GM12878 (cell line): ENCODE measurements at regions of chr16 and their contacts with region 1.

Region 1: DNA sequence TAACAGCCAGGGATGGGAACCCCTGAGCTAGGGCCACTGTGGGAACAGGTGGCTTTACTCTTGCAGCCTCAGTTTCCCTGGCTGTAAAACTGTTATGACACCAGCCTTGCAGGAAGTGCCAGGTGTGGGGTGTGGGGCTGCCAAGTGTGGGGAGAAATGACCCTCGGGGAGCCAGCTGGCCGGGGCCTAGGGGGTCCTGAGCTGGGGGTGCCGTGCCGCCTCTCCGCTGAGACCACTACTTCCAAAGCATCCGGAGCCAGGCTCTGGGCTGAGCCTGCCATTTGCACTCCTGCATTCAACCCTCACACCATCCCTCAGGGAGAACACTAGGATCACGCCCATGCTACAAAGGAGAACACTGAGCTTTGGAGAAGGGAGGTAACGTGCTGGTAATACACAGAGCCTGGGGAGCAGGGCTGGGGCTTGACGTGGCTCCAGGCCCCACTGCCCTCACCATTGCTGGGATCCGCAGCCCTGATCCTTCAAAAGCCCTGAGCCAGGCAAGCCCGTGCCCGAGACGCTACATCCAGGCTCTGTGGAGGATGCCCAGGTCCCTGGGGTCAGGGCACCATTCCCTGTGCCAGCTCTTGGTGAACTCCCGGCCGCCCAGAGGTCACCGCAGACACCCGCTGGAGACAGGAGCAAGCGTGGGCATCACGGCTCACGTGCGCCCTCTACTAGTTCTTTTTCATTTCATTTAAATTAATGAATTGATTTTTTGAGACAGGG is 28.8 kb upstream of the GINS2 start:
- DNase-seq: no peak
- ATAC-seq: peak; percentile 78
- H3K4me3 ChIP-seq: no peak overlapping the region
- H3K27ac ChIP-seq: no peak overlapping the region
- H3K4me1 ChIP-seq: no peaks in the 10 kb centered on the region
- H3K27me3 ChIP-seq: no peaks in the 10 kb centered on the region
- CTCF ChIP-seq: peak; percentile 57 to 65 (median 64)
- EP300 ChIP-seq: no peak
- POLR2A ChIP-seq: no peak
- RAD21 ChIP-seq: peak; percentile 77

Region 2: DNA sequence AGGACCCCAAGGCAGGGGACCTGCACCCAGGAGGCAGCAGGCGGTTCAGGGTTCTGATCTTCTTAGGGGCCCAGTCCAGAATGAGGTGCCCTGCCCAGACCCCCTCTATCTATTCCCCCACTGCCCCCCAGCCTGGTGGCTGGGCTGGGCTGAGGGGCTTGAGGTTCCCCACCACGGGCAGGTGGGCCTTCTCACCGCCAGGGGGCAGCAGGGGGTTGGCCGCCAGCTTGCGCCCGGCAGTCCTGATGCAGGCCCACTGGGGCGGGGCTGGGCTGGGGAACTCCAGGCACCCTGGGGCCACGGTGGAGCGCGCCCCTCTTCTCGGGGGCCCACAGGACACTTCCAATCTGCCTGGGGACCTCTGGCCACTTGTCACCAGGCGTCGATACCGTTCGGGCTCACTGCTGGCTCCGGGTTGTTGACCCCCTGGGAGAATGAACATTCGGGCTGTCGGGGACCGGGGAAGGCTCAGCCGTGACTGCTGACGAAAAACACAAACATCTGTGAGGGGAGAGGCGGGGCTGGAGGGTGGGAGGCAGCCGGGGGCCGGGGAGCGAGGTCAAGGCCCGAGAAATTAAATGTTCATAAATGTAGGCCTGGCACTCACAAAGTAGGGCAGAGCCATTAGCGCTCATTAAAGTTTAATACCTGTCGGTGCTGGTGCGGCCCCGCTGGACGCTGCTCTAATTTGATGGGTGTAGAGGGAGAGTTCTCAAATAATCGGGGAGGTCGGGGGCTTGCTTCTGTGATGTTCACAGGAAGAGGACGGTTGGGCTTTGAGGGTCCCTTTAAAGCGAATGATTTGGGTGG is 323.7 kb before region 1 on chr16:
- CTCF ChIA-PET with region 1: interaction called, 4 read pairs
- POLR2A ChIA-PET with region 1: no interaction called
- RAD21 ChIA-PET with region 1: interaction called, 3 read pairs
- SMC1A ChIA-PET with region 1: no interaction called
- in situ Hi-C with region 1: no loop called
- intact Hi-C with region 1: loop called (anchors 10 kb)
- DNase-seq: no peak
- ATAC-seq: peak; percentile 86
- H3K4me3 ChIP-seq: no peak overlapping the region
- H3K27ac ChIP-seq: no peak overlapping the region
- H3K4me1 ChIP-seq: peaks cover 5% of the 10 kb centered on the region
- H3K27me3 ChIP-seq: peaks cover 0 to 6% of the 10 kb centered on the region in 2 experiments; a peak in 2 of 4 replicates
- CTCF ChIP-seq: peak; percentile 71 to 93 (median 84)
- EP300 ChIP-seq: no peak
- POLR2A ChIP-seq: no peak
- RAD21 ChIP-seq: peak; percentile 57

Region 3: DNA sequence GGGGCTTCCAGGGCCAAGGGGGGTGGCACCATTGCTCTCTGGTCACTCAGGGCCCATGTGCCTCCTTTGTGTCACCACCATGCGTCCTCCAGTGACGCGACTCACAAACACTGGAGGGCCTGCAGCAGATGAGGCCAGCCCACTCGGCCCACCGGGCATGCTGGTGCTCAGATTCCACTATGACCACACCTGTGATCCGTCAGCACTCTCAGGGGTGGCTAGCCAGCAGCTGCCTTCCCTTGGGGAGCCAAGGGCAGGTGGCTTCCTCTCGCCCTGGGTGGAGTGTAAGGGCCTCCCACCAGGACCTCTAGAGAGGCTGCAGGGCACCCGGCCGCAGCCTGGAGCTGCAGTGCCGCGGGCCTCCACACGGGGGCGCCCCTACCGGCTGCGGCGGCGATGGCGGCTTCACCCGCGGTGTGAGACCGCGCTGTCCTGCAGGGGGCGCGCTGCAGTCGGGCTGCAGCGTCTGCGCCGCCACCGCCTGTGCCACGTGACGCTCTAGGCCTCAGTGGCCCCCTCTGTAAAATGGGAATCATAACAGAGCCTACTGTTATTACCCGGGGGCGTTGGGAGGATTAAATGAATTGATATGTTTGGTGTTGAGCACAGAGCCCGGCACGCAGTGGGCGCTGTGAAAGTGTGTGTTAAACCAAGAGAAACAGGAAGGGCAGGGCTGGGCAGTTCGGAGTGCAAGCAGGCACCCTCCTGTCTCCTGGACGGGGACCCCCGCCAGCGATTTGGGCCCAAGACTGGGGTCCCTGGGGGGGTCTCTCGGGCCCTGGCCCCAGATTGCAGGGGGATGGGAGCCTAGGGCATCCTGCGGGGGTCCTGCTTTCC is 296.8 kb before region 1 on chr16:
- CTCF ChIA-PET with region 1: interaction called, 4 read pairs
- POLR2A ChIA-PET with region 1: no interaction called
- RAD21 ChIA-PET with region 1: no interaction called
- SMC1A ChIA-PET with region 1: interaction called, 4 read pairs
- in situ Hi-C with region 1: no loop called
- intact Hi-C with region 1: loop called (anchors 5 kb)
- DNase-seq: no peak
- ATAC-seq: peak; percentile 89
- H3K4me3 ChIP-seq: no peak overlapping the region
- H3K27ac ChIP-seq: no peak overlapping the region
- H3K4me1 ChIP-seq: no peaks in the 10 kb centered on the region
- H3K27me3 ChIP-seq: no peaks in the 10 kb centered on the region; a peak in 1 of 4 replicates
- CTCF ChIP-seq: peak; percentile 96 to 100 (median 98)
- EP300 ChIP-seq: no peak
- POLR2A ChIP-seq: no peak
- RAD21 ChIP-seq: peak; percentile 46; the same call in 1 of the 2 replicates

Region 4: GRCh38 chr16:85583491-85584181 is 133.9 kb before region 1 on chr16:
- CTCF ChIA-PET with region 1: no interaction called
- POLR2A ChIA-PET with region 1: no interaction called
- RAD21 ChIA-PET with region 1: no interaction called
- SMC1A ChIA-PET with region 1: no interaction called
- in situ Hi-C with region 1: no loop called
- intact Hi-C with region 1: no loop called
- DNase-seq: no peak
- ATAC-seq: no peak
- H3K4me3 ChIP-seq: no peak overlapping the region
- H3K27ac ChIP-seq: no peak overlapping the region
- H3K4me1 ChIP-seq: no peaks in the 10 kb centered on the region
- H3K27me3 ChIP-seq: no peaks in the 10 kb centered on the region
- CTCF ChIP-seq: no peak
- EP300 ChIP-seq: no peak
- POLR2A ChIP-seq: no peak
- RAD21 ChIP-seq: no peak

Region 5: DNA sequence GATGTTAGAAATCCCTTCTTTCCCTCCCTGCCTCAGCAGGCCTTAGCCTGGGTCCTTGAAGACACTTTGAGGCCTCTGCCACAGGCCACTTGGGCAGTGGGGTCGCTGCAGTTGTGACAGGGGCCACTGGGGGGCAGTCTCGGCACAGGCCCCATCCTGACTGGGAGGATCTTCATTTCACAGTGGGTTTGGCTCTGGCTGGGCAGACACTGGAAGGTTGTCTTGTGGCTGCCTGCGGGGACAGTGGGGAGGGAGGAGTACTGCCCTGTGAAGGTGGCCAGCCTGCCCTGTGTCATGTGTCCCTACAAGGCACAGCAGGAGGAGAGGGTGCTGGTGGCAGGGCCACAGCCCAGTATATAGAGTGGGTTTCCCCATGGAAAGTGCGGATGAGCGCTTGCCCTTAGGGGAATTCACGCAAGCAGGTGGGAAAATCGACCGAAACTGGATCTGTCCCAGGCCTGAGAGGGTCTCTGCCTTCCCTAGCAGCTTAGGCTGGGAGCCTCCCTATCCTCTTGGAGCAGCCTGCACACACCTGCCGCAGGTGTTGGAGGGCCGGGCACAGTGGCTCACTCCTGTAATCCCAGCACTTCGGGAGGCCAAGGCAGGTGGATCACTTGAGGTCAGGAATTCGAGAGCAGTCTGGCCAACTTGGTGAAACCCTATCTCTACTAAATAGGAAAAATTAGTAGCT is 57.6 kb before region 1 on chr16:
- CTCF ChIA-PET with region 1: interaction called, 29 read pairs
- POLR2A ChIA-PET with region 1: interaction called, 3 read pairs
- RAD21 ChIA-PET with region 1: interaction called, 3 read pairs
- SMC1A ChIA-PET with region 1: interaction called, 6 read pairs
- in situ Hi-C with region 1: loop called (anchors 5 kb)
- intact Hi-C with region 1: loop called (anchors 1 kb)
- DNase-seq: no peak
- ATAC-seq: peak; percentile 94
- H3K4me3 ChIP-seq: no peak overlapping the region
- H3K27ac ChIP-seq: no peak overlapping the region
- H3K4me1 ChIP-seq: no peaks in the 10 kb centered on the region
- H3K27me3 ChIP-seq: no peaks in the 10 kb centered on the region
- CTCF ChIP-seq: peak; percentile 87 to 96 (median 95)
- EP300 ChIP-seq: no peak
- POLR2A ChIP-seq: no peak; the same call in 1 of the 2 replicates
- RAD21 ChIP-seq: peak; percentile 80

Region 6: GRCh38 chr16:85675251-85675927 is 42.2 kb before region 1 on chr16:
- CTCF ChIA-PET with region 1: interaction called, 36 read pairs
- POLR2A ChIA-PET with region 1: interaction called, 4 read pairs
- RAD21 ChIA-PET with region 1: no interaction called
- SMC1A ChIA-PET with region 1: interaction called, 3 read pairs
- in situ Hi-C with region 1: no loop called
- intact Hi-C with region 1: loop called (anchors 5 kb)
- DNase-seq: no peak
- ATAC-seq: peak; percentile 43
- H3K4me3 ChIP-seq: no peak overlapping the region
- H3K27ac ChIP-seq: peak overlapping the region; percentile 28; the same call in 1 of the 2 replicates
- H3K4me1 ChIP-seq: peaks cover 16% of the 10 kb centered on the region
- H3K27me3 ChIP-seq: no peaks in the 10 kb centered on the region
- CTCF ChIP-seq: peak; percentile 23 to 43 (median 35); a peak in 3 of 6 replicates
- EP300 ChIP-seq: no peak
- POLR2A ChIP-seq: no peak
- RAD21 ChIP-seq: 0 out of 2 replicates have a peak, but pooled peaks have one; percentile 16

Region 7: DNA sequence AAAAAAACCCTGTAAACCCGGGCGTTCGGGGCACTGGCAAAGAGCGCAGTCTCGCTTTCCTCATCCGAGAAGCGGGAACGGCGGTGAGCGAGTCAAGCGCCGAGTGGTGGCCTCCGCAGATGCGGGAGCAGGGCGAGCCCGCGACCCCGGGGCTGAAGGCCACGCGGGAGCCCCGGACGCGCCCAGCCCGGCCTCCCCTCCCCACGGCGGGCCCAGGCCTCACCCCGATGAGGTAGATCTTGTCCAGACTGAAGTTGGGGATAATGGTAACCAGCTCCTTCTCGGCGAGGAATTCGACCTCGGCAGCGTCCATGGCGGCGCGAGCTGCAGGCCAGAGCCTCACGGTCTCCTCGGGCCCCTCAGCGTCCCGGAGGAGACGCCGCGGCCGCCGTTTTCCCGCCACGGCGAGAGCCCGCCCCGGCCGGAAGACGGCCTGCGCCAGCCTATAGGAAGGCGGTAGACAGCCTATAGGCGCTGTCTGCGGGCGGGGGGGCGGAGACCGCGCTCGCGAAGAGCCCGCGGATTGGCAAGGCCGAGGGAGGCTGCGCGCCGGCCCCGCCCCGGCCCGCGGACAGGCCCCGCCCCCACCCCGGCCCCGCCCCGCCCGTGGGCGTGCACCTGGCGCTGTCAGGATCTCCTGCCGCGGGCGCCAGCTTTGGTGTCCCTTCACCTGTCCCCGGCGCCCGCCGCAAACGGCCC is 28.8 kb before region 1 on chr16 and contains the start of gene GINS2:
- CTCF ChIA-PET with region 1: interaction called, 31 read pairs
- POLR2A ChIA-PET with region 1: no interaction called
- RAD21 ChIA-PET with region 1: no interaction called
- SMC1A ChIA-PET with region 1: interaction called, 3 read pairs
- in situ Hi-C with region 1: no loop called
- intact Hi-C with region 1: no loop called
- DNase-seq: peak; percentile 44
- ATAC-seq: peak; percentile 96
- H3K4me3 ChIP-seq: peak within 1 kb of the TSS; percentile 81
- H3K27ac ChIP-seq: peak within 1 kb of the TSS; percentile 69
- H3K4me1 ChIP-seq: peaks cover 23% of the 10 kb centered on the region
- H3K27me3 ChIP-seq: no peaks in the 10 kb centered on the region
- CTCF ChIP-seq: no peak
- EP300 ChIP-seq: no peak
- POLR2A ChIP-seq: peak; percentile 84
- RAD21 ChIP-seq: no peak
- polyA plus RNA-seq, gene GINS2: 69.4 to 90.8 TPM

Region 8: DNA sequence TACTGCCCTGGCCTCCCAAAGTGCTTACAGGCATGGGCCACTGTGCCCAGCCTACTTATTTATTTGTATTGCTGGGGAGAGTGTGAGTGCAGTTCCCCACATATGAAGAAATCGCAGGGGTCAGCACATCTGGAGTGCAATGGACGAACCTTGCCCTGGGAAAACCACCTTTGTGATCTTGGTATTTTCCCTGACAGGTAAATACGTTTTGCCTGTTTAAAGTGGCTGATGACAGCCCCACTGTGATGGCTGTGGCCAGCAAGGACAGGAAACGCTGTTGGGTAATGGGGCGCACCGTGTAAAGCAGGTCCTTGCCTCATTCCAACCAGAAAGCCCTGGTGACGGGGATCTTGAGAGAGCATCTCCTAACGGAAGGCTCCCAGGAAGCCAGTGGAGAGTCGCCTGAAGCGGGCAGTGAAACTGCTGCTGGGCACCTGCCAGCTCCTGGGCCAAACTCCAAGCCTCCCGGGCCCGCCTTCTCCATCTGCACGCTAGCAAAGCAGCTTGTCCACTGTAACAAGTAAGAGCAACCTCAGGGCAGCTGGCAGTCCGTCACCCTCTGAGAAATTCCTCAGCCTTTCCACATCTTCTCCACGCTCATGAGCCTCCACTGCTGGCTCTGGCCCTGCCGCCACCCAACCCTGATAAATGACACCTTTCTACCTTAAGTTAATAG is 64.3 kb after region 1 on chr16:
- CTCF ChIA-PET with region 1: no interaction called
- POLR2A ChIA-PET with region 1: no interaction called
- RAD21 ChIA-PET with region 1: no interaction called
- SMC1A ChIA-PET with region 1: no interaction called
- in situ Hi-C with region 1: no loop called
- intact Hi-C with region 1: no loop called
- DNase-seq: no peak
- ATAC-seq: no peak
- H3K4me3 ChIP-seq: no peak overlapping the region
- H3K27ac ChIP-seq: no peak overlapping the region
- H3K4me1 ChIP-seq: no peaks in the 10 kb centered on the region
- H3K27me3 ChIP-seq: no peaks in the 10 kb centered on the region
- CTCF ChIP-seq: no peak
- EP300 ChIP-seq: no peak
- POLR2A ChIP-seq: no peak
- RAD21 ChIP-seq: no peak